ENCODE measurements at regions of chr7 and their contacts with region 1.

Region 1: GRCh38 chr7:101815835-101816493 is 1.5 kb upstream of the CUX1 start:
- DNase-seq: peak; percentile 75
- H3K4me3 ChIP-seq: peak overlapping the region; percentile 48 to 70 (median 68)
- H3K27ac ChIP-seq: peak overlapping the region; percentile 48
- H3K4me1 ChIP-seq: peaks cover 16% of the 10 kb centered on the region
- H3K27me3 ChIP-seq: no peaks in the 10 kb centered on the region
- CTCF ChIP-seq: peak in 1 of 2 donors; percentile 32

Region 2: GRCh38 chr7:101542527-101543241 is 273.3 kb before region 1 on chr7:
- CTCF ChIA-PET with region 1: no interaction called
- dilution Hi-C with region 1: no loop called
- in situ Hi-C with region 1: no loop called
- intact Hi-C with region 1: loop called (anchors 1 kb)
- DNase-seq: peak; percentile 34
- H3K4me3 ChIP-seq: no peak overlapping the region
- H3K27ac ChIP-seq: no peak overlapping the region
- H3K4me1 ChIP-seq: no peaks in the 10 kb centered on the region
- H3K27me3 ChIP-seq: no peaks in the 10 kb centered on the region
- CTCF ChIP-seq: peak; percentile 76 to 89

Region 3: GRCh38 chr7:101688183-101688831 is 127.7 kb before region 1 on chr7:
- CTCF ChIA-PET with region 1: interaction called, 6 read pairs
- dilution Hi-C with region 1: no loop called
- in situ Hi-C with region 1: loop called (anchors 5 to 10 kb)
- intact Hi-C with region 1: loop called (anchors 1 kb)
- DNase-seq: peak; percentile 34
- H3K4me3 ChIP-seq: peak overlapping the region in 2 of 3 experiments; percentile 34 to 35
- H3K27ac ChIP-seq: no peak overlapping the region
- H3K4me1 ChIP-seq: peaks cover 6% of the 10 kb centered on the region
- H3K27me3 ChIP-seq: no peaks in the 10 kb centered on the region
- CTCF ChIP-seq: peak; percentile 53 to 92

Region 4: DNA sequence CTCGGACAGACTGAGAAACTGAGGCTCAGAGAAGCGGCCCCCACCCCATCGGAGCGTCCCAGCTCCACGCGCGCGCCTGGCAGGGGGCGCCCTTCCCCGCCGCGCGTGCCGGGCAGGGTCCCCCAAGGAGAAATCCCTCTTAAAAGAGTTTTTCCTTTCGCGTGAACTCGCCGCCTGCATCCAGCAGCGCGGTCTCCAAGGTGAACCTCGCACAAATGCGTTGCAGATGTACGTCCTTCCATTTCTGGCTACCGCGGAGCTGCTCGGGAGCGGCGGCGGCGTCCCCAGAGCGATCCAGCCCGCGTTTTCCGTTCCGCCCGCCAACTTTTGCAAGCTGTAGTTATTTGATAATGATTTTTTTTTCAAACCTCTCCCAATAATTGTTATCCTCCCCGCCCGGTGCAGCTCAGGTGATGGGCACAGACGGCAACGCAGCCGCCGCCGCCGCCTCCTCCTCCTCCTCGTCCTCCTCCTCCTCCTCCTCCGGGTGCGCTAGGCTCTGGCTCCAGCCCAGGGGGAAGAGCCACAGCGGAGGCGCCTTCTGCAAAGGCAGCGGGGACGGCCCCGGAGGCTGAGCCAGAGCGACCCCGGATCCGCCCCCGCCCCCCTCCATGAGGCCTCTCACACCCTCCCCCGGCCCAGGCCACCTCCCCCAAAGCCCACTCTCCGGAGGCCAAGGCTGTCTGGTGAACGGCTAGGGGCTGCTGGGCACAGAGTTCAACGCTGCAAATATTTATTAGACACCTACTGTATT is 72.5 kb before region 1 on chr7:
- CTCF ChIA-PET with region 1: no interaction called
- dilution Hi-C with region 1: no loop called
- in situ Hi-C with region 1: loop called in 1 of 2 experiments (anchors 10 kb)
- intact Hi-C with region 1: loop called (anchors 1 kb)
- DNase-seq: peak; percentile 66
- H3K4me3 ChIP-seq: peak overlapping the region; percentile 55 to 57 (median 55)
- H3K27ac ChIP-seq: no peak overlapping the region
- H3K4me1 ChIP-seq: peaks cover 5% of the 10 kb centered on the region
- H3K27me3 ChIP-seq: no peaks in the 10 kb centered on the region
- CTCF ChIP-seq: peak in 1 of 2 donors; percentile 65

Region 5: GRCh38 chr7:101882595-101883564 is 66.9 kb after region 1 on chr7:
- CTCF ChIA-PET with region 1: no interaction called
- dilution Hi-C with region 1: no loop called
- in situ Hi-C with region 1: no loop called
- intact Hi-C with region 1: loop called (anchors 2 kb)
- DNase-seq: peak; percentile 99
- H3K4me3 ChIP-seq: peak overlapping the region in 1 of 3 experiments; percentile 28
- H3K27ac ChIP-seq: peak overlapping the region; percentile 88
- H3K4me1 ChIP-seq: peaks cover 26% of the 10 kb centered on the region
- H3K27me3 ChIP-seq: no peaks in the 10 kb centered on the region
- CTCF ChIP-seq: no peak

Region 6: DNA sequence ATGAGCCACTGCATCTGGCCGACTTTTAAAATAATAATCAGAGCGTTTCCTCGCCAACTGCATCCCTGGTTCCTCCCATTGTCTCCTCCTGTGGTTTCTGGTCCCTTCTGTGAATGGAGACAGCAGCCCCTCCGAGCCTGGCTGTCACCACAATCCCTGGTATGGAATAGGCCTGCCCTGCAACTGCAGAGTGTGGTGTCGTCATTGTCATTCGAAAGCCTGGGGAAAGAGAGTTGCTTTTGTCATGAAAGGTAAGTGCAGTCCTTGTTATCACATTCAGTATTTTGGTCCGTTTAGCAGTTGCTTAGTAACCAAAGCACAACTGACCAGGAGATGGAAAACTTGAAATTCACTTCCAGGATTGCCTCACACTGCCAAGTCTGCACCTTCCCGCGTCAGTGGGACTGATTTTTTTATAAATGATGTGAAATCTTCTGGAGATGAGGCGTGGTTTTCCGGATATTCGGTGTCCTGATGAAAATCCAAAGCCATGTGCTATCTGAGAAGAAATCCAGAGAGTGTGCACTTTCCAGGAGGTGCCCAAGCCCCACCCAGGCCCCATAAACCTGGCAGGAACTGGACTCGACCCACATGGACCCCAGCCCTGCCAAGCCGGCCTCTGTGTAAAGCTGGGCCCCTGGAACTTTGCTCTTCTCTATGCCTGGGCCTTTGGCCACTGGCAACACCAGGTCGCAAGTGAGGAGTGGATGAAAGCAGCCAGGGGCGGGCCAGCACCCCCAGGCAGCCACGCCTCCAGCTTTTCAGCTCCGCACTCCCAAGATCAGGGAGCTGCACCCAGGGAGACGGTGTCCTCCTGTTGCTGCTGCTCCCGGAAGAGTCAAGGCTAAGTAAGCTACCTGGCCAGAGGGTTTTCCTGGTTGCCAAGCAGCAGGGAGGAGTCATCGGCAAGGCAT is 337.0 kb after region 1 on chr7:
- CTCF ChIA-PET with region 1: no interaction called
- dilution Hi-C with region 1: no loop called
- in situ Hi-C with region 1: no loop called
- intact Hi-C with region 1: loop called (anchors 10 kb)
- DNase-seq: peak; percentile 42
- H3K4me3 ChIP-seq: no peak overlapping the region
- H3K27ac ChIP-seq: no peak overlapping the region
- H3K4me1 ChIP-seq: peaks cover 11% of the 10 kb centered on the region
- H3K27me3 ChIP-seq: no peaks in the 10 kb centered on the region
- CTCF ChIP-seq: no peak

Region 7: GRCh38 chr7:102272075-102272917 is 456.3 kb after region 1 on chr7:
- CTCF ChIA-PET with region 1: no interaction called
- dilution Hi-C with region 1: no loop called
- in situ Hi-C with region 1: no loop called
- intact Hi-C with region 1: loop called (anchors 2 kb)
- DNase-seq: peak; percentile 66
- H3K4me3 ChIP-seq: no peak overlapping the region
- H3K27ac ChIP-seq: no peak overlapping the region
- H3K4me1 ChIP-seq: peaks cover 5% of the 10 kb centered on the region
- H3K27me3 ChIP-seq: no peaks in the 10 kb centered on the region
- CTCF ChIP-seq: peak; percentile 91 to 95

Measured in mammary epithelial cell (primary cell).